AG04450 (cell line): ENCODE measurements at regions of chr2 and their contacts with region 1.

Region 1: DNA sequence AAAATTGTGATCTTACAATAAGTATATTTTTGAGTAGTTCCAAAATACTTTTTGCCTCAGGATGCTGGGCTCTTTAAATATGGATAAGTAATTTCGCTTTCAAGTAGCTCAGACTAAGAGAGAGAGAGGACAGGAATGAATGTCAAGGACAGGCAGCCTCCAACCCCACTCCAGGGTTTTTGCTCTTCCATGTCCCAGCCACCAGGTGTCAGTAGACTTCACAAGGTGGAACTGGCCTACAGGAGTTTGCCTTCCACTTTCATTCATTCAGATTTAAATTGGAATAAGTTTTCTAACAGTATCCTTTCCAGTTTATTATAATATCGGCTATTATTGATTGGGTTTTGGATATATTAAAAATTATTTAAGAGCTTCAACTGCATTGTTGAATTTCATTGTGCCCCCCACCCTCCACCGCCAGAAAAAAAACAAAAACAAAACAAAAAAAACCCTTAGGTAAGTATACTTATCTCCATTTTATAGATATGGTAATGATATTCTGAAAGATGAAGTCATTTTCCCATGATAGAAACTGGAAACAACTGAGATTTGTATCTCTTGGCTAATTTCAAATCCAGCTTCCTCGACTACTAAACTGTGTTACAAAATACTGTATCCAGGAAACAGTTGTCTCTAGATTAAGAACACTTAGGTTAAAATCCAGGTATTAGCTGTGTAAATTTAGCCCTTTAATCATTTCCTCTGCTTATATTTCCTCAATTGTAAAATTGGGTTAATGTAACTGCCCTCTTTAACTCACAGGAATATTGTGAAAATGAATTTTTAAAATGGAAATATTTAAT is 793.1 kb downstream of the ERBB4 start:
- DNase-seq: no peak
- H3K4me3 ChIP-seq: no peak overlapping the region
- H3K27ac ChIP-seq: no peak overlapping the region
- H3K27me3 ChIP-seq: no peaks in the 10 kb centered on the region
- CTCF ChIP-seq: peak; percentile 80

Region 2: GRCh38 chr2:211802666-211803065 is 57.2 kb after region 1 on chr2:
- CTCF ChIA-PET with region 1: no interaction called
- POLR2A ChIA-PET with region 1: no interaction called
- DNase-seq: no peak
- H3K4me3 ChIP-seq: no peak overlapping the region
- H3K27ac ChIP-seq: no peak overlapping the region
- H3K27me3 ChIP-seq: no peaks in the 10 kb centered on the region
- CTCF ChIP-seq: no peak

Region 3: DNA sequence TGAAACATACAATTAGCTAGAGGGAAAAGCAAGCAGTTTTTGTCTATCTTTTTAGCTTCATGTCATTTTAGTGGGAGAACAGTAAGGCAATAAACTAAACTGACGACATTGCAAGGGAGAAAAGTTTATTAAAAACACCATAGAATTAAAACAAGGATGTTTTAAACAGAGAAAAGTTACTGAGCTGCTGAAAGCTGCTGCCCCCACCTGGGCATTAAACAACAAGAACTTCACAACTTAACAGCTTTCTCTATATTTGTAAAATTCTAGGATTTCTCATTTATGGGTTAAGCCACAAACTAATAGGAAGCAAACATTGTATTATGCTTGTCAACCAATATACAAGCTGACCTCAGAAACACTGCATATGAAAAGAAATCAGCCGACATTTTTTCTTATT is 504.0 kb after region 1 on chr2:
- CTCF ChIA-PET with region 1: interaction called, 48 read pairs
- POLR2A ChIA-PET with region 1: no interaction called
- DNase-seq: no peak
- H3K4me3 ChIP-seq: no peak overlapping the region
- H3K27ac ChIP-seq: no peak overlapping the region
- H3K27me3 ChIP-seq: no peaks in the 10 kb centered on the region
- CTCF ChIP-seq: peak; percentile 33; the same call in 1 of the 2 replicates

Region 4: DNA sequence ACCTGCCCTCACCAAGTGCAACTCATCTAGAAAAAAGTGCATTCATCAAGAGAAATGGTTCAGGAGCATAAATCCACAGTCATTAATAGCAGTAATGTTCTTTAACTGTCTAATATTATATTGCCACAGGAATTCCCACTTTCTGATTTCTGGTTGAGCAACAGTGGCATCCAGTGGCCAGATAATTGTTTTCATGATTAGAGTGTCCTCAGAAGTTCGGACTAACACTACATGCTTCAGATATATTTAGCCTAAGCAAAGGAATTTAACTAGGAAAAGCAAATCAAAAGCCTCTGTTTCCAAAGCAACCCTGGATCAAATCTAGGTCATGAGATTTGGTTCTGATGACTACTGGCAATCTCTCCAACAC is 802.9 kb after region 1 on chr2:
- CTCF ChIA-PET with region 1: interaction called, 28 read pairs
- POLR2A ChIA-PET with region 1: no interaction called
- DNase-seq: no peak
- H3K4me3 ChIP-seq: no peak overlapping the region
- H3K27ac ChIP-seq: no peak overlapping the region
- H3K27me3 ChIP-seq: no peaks in the 10 kb centered on the region
- CTCF ChIP-seq: peak; percentile 36